ENCODE measurements at regions of chr11 and their contacts with region 1.

Region 1: DNA sequence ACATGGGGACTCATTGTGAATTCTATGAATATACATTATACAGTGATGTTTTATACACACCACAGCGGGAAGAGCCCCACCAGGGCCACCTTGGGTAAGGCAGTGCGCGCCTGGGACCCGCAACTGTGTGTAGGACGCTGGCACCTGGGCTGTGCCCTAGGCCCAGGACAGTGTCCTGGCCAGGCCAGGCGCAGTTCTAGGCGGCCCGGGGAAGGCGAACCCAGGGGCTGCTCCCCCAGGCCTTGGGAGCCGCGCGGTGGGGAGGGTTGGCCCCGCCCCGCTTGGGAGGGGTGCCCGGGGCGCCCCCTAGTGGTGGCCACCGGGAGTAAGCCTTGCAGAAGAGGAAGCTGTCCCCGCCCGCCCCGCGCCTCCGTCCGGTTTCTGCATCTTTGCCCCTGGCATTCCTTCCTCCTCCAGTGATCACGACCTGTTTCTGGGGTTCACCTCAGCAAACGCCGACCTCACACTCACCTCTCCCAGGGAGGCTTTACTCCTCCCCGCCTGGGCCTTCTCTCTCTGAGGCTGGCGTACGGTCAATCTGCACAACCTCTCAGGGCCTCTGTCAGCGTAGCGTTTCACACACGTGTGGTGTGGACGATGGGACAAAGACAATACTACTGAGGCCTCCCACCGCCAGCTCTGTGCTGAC is 9.5 kb upstream of the EHD1 start:
- DNase-seq: peak; percentile 81
- H3K4me3 Mint-ChIP-seq: peak overlapping the region; percentile 80
- H3K27ac Mint-ChIP-seq: peak overlapping the region; percentile 86
- H3K4me1 Mint-ChIP-seq: peaks cover 28% of the 10 kb centered on the region
- H3K27me3 Mint-ChIP-seq: no peaks in the 10 kb centered on the region

Region 2: GRCh38 chr11:64778508-64779346 is 109.2 kb before region 1 on chr11 and contains the start of gene SF1:
- intact Hi-C with region 1: no loop called
- DNase-seq: peak; percentile 99
- H3K4me3 Mint-ChIP-seq: peak within 1 kb of the TSS; percentile 87
- H3K27ac Mint-ChIP-seq: peak within 1 kb of the TSS; percentile 97
- H3K4me1 Mint-ChIP-seq: peaks cover 57% of the 10 kb centered on the region
- H3K27me3 Mint-ChIP-seq: peaks cover 2% of the 10 kb centered on the region
- total RNA-seq, gene SF1: 518 and 538 TPM in 2 replicates

Region 3: GRCh38 chr11:64864473-64865285 is 23.2 kb before region 1 on chr11:
- intact Hi-C with region 1: loop called (anchors 1 kb)
- DNase-seq: no peak
- H3K4me3 Mint-ChIP-seq: peak overlapping the region; percentile 58
- H3K27ac Mint-ChIP-seq: peak overlapping the region; percentile 92
- H3K4me1 Mint-ChIP-seq: peaks cover 79% of the 10 kb centered on the region
- H3K27me3 Mint-ChIP-seq: no peaks in the 10 kb centered on the region

Region 4: GRCh38 chr11:64900263-64900678 is 12.4 kb after region 1 on chr11:
- intact Hi-C with region 1: loop called (anchors 1 kb)
- DNase-seq: peak; percentile 69
- H3K4me3 Mint-ChIP-seq: peak overlapping the region; percentile 66
- H3K27ac Mint-ChIP-seq: peak overlapping the region; percentile 86
- H3K4me1 Mint-ChIP-seq: peaks cover 12% of the 10 kb centered on the region
- H3K27me3 Mint-ChIP-seq: no peaks in the 10 kb centered on the region